ENCODE measurements at regions of chr3 and their contacts with region 1.

Region 1: DNA sequence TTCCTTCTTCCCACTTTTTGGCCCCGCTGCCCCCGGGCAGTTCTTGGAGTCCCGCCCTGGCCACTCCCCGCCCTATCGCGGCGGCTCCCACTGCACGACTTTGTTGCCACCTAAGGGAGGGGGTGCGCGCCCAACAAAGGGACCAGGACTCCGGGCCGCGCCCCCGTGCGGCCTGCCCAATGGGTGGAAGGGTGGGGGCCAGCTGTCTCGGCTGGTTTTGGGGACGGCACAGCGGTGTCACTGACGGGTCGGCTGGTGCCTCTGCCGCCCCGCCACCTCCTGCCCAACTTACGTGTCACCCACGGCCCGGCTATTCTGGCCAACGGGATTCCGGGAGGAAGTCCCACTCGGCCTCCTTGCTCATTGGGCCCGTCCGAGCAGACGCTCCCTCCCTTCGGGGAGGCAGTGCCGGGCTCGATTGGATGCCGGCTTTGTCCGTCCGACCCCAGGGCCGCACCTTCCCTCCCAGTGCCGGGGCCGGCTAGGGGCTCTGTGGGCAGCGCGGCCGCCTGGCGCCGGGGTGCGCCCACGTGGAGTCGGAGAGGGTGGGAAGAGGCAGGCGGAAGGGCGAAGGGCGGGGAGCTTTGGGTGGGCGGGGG is at the start of gene GOLIM4:
- DNase-seq: peak; percentile 90
- ATAC-seq: peak; percentile 90
- H3K4me3 ChIP-seq: peak within 1 kb of the TSS; percentile 76
- H3K27ac ChIP-seq: peak within 1 kb of the TSS; percentile 81
- H3K4me1 ChIP-seq: no peaks in the 10 kb centered on the region
- H3K27me3 ChIP-seq: no peaks in the 10 kb centered on the region
- CTCF ChIP-seq: 0 out of 6 replicates have a peak, but pooled peaks of 2 of the 3 experiments have one; percentile 1 to 7
- EP300 ChIP-seq: no peak
- POLR2A ChIP-seq: peak; percentile 78
- RAD21 ChIP-seq: no peak
- polyA plus RNA-seq, gene GOLIM4: 11.1 to 14.6 TPM

Region 2: DNA sequence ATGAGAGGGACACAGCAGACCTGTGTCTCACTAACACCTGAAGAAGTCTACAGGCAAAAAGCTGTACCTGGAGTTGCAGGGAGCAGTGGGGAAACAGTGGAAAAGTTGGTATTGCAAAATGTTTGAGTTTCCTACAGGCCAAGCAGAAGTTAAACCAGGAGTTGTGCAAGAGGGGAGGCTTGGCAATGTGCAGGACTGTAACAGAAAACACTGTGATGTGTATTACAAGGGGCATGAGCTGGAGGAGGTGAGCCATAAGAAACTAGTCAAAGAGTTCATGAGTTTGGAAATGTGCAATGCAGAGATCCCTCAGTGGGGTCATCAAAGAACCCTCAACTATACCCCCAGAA is 574.7 kb before region 1 on chr3:
- CTCF ChIA-PET with region 1: no interaction called
- POLR2A ChIA-PET with region 1: no interaction called
- RAD21 ChIA-PET with region 1: no interaction called
- SMC1A ChIA-PET with region 1: no interaction called
- in situ Hi-C with region 1: no loop called
- intact Hi-C with region 1: no loop called
- DNase-seq: no peak
- ATAC-seq: no peak
- H3K4me3 ChIP-seq: no peak overlapping the region
- H3K27ac ChIP-seq: no peak overlapping the region
- H3K4me1 ChIP-seq: no peaks in the 10 kb centered on the region
- H3K27me3 ChIP-seq: no peaks in the 10 kb centered on the region
- CTCF ChIP-seq: no peak
- EP300 ChIP-seq: no peak
- POLR2A ChIP-seq: no peak
- RAD21 ChIP-seq: no peak

Region 3: DNA sequence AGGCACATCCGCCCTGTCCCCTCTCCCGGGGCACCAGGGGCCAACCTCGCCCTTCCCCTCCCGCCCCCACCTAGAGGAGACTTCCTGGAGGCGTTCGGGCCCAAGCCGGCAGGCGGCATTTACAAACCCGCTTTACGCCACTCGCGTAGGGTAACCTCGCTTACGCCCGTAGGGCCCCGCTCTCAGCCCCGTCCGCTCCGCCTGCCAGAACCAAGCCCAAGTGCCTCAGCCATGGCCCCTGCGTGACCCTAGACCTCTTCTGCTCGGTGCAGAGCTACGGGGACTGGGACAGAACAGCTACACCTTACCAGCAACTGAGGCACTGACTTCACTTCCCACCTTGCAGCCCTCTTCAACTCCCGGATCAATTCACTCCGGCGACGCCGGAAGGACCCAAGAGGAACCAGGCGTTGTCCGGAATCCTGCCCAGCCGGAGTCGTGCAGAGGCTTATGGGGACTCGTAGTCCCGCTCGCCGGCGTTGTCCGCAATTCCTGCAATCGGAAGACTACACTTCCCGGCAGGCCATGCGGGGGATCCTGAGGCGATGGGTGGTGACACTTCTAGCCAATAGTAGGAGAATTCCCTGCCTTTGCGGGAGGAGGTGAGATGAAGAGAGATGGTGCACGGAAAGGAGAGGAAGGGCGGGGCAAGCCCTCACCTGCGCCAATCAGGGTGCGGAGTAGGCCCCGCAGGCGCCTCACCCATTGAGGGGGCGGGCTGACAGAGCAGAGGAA is 361.0 kb before region 1 on chr3 and contains the start of gene PDCD10:
- CTCF ChIA-PET with region 1: no interaction called
- POLR2A ChIA-PET with region 1: no interaction called
- RAD21 ChIA-PET with region 1: interaction called, 3 read pairs
- SMC1A ChIA-PET with region 1: no interaction called
- in situ Hi-C with region 1: no loop called
- intact Hi-C with region 1: loop called (anchors 10 kb)
- DNase-seq: peak; percentile 98
- ATAC-seq: peak; percentile 91
- H3K4me3 ChIP-seq: peak within 1 kb of the TSS; percentile 97
- H3K27ac ChIP-seq: peak within 1 kb of the TSS; percentile 86
- H3K4me1 ChIP-seq: peaks cover 3% of the 10 kb centered on the region; the same call in 1 of the 2 replicates
- H3K27me3 ChIP-seq: no peaks in the 10 kb centered on the region
- CTCF ChIP-seq: 0 out of 6 replicates have a peak, but pooled peaks of 1 of the 3 experiments have one; percentile 7
- EP300 ChIP-seq: no peak
- POLR2A ChIP-seq: peak; percentile 85
- RAD21 ChIP-seq: no peak
- polyA plus RNA-seq, gene PDCD10: 199 to 247 TPM

Region 4: DNA sequence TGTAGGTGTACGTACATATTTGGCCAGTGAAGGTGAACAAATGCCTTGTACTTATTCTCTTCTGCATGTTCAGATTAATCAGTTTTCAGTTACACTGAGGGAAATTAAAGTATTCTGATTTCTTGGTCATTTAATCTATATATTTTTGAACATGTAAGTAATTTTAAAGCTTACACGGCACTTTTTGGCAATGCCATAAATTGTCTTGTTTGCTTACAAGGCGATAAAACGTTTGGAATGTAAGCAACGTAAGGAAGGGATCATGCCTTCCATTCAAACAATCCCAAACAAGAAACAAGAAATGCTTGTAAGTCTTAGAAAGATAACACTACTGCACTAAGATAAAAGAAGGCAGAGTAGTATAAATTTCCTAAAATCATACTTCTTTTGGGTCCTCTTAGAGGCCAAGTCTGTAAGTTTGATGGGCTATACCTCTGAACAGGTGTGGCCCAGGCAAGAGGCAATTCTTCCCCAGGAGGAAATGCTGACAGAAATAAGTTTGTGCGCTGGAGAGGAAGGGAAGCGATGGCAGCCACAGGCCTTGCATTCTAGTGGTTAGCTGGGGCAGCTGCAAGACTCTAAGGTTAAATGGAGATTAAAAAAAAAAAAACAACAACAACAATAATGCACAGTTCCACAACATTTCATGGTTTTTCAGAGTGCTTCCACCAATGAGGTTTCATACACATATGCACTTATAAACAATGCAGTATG is 73.8 kb before region 1 on chr3:
- CTCF ChIA-PET with region 1: no interaction called
- POLR2A ChIA-PET with region 1: no interaction called
- RAD21 ChIA-PET with region 1: no interaction called
- SMC1A ChIA-PET with region 1: no interaction called
- in situ Hi-C with region 1: no loop called
- intact Hi-C with region 1: no loop called
- DNase-seq: no peak
- ATAC-seq: no peak
- H3K4me3 ChIP-seq: no peak overlapping the region
- H3K27ac ChIP-seq: no peak overlapping the region
- H3K4me1 ChIP-seq: no peaks in the 10 kb centered on the region
- H3K27me3 ChIP-seq: no peaks in the 10 kb centered on the region
- CTCF ChIP-seq: no peak
- EP300 ChIP-seq: no peak
- POLR2A ChIP-seq: no peak
- RAD21 ChIP-seq: no peak

Region 5: GRCh38 chr3:168034152-168034928 is 61.4 kb before region 1 on chr3:
- CTCF ChIA-PET with region 1: no interaction called
- POLR2A ChIA-PET with region 1: no interaction called
- RAD21 ChIA-PET with region 1: no interaction called
- SMC1A ChIA-PET with region 1: no interaction called
- in situ Hi-C with region 1: no loop called
- intact Hi-C with region 1: no loop called
- DNase-seq: no peak
- ATAC-seq: no peak
- H3K4me3 ChIP-seq: no peak overlapping the region
- H3K27ac ChIP-seq: no peak overlapping the region
- H3K4me1 ChIP-seq: no peaks in the 10 kb centered on the region
- H3K27me3 ChIP-seq: no peaks in the 10 kb centered on the region
- CTCF ChIP-seq: no peak
- EP300 ChIP-seq: no peak
- POLR2A ChIP-seq: no peak
- RAD21 ChIP-seq: no peak

Region 6: DNA sequence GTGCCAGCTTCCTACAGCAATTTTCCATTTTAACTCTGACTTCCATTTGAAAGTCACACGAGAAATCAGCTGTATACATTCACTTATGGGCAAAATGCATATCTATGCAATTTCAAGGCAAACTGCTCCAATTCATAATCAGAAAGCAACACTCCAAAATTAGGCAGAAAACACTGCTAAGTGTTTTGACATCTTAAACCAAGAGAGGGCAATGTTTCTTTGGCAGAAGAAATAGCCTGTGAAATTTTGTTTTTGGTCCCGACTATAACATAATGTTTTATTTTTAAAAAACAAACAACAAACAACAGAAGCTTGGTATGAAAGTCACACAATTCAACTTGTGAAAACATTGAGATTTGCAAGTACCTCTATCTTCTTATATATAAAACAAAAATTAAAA is 42.6 kb before region 1 on chr3:
- CTCF ChIA-PET with region 1: interaction called, 23 read pairs
- POLR2A ChIA-PET with region 1: interaction called, 7 read pairs
- RAD21 ChIA-PET with region 1: interaction called, 26 read pairs
- SMC1A ChIA-PET with region 1: interaction called, 72 read pairs
- in situ Hi-C with region 1: no loop called
- intact Hi-C with region 1: loop called (anchors 1 kb)
- DNase-seq: no peak
- ATAC-seq: peak; percentile 29; the same call in 2 of the 3 replicates
- H3K4me3 ChIP-seq: no peak overlapping the region
- H3K27ac ChIP-seq: no peak overlapping the region
- H3K4me1 ChIP-seq: peaks cover 12% of the 10 kb centered on the region
- H3K27me3 ChIP-seq: no peaks in the 10 kb centered on the region
- CTCF ChIP-seq: peak in 2 of 3 experiments; percentile 27 to 37; a peak in 2 of 6 replicates
- EP300 ChIP-seq: no peak
- POLR2A ChIP-seq: no peak
- RAD21 ChIP-seq: peak; percentile 63

Region 7: GRCh38 chr3:168061332-168061996 is 34.2 kb before region 1 on chr3:
- CTCF ChIA-PET with region 1: interaction called, 35 read pairs
- POLR2A ChIA-PET with region 1: interaction called, 8 read pairs
- RAD21 ChIA-PET with region 1: interaction called, 6 read pairs
- SMC1A ChIA-PET with region 1: interaction called, 67 read pairs
- in situ Hi-C with region 1: no loop called
- intact Hi-C with region 1: loop called (anchors 2 kb)
- DNase-seq: no peak
- ATAC-seq: peak; percentile 96
- H3K4me3 ChIP-seq: peak overlapping the region; percentile 42; the same call in 1 of the 2 replicates
- H3K27ac ChIP-seq: no peak overlapping the region
- H3K4me1 ChIP-seq: peaks cover 10% of the 10 kb centered on the region
- H3K27me3 ChIP-seq: no peaks in the 10 kb centered on the region
- CTCF ChIP-seq: no peak
- EP300 ChIP-seq: peak in 1 of 2 experiments; percentile 48; a peak in 1 of 4 replicates
- POLR2A ChIP-seq: no peak
- RAD21 ChIP-seq: 0 out of 2 replicates have a peak, but pooled peaks have one; percentile 2

Region 8: DNA sequence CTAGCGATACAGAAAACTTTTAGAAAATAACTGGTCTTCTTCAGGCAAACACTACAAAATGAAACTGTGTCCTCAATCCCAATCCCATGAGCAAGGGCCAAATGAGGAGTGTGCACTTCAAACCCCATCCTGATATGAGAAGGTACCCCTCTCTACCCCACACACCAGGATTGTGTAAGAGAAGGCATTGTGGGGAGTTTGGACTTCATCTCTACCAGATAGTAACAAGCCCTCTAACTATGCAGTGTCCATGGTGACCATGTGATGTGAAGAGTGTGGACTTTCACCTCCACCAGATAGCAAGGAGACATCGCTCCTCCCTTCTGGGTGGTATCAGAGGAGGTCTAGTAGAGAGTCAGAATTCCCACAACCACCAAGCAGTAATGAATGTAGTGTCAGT is 798.5 kb after region 1 on chr3:
- CTCF ChIA-PET with region 1: no interaction called
- POLR2A ChIA-PET with region 1: no interaction called
- RAD21 ChIA-PET with region 1: no interaction called
- SMC1A ChIA-PET with region 1: no interaction called
- in situ Hi-C with region 1: no loop called
- intact Hi-C with region 1: no loop called
- DNase-seq: no peak
- ATAC-seq: no peak
- H3K4me3 ChIP-seq: no peak overlapping the region
- H3K27ac ChIP-seq: no peak overlapping the region
- H3K4me1 ChIP-seq: no peaks in the 10 kb centered on the region
- H3K27me3 ChIP-seq: no peaks in the 10 kb centered on the region
- CTCF ChIP-seq: no peak
- EP300 ChIP-seq: no peak
- POLR2A ChIP-seq: no peak
- RAD21 ChIP-seq: no peak

Measured in GM12878 (cell line).